Right ventricle myocardium inferior (tissue), 1 donor: ENCODE measurements at regions of chr7 and their contacts with region 1.

Region 1: GRCh38 chr7:100586266-100587025 is at the start of gene FBXO24:
- DNase-seq: peak; percentile 100
- ATAC-seq: peak; percentile 93
- total RNA-seq, gene FBXO24: 0.41 TPM

Region 2: DNA sequence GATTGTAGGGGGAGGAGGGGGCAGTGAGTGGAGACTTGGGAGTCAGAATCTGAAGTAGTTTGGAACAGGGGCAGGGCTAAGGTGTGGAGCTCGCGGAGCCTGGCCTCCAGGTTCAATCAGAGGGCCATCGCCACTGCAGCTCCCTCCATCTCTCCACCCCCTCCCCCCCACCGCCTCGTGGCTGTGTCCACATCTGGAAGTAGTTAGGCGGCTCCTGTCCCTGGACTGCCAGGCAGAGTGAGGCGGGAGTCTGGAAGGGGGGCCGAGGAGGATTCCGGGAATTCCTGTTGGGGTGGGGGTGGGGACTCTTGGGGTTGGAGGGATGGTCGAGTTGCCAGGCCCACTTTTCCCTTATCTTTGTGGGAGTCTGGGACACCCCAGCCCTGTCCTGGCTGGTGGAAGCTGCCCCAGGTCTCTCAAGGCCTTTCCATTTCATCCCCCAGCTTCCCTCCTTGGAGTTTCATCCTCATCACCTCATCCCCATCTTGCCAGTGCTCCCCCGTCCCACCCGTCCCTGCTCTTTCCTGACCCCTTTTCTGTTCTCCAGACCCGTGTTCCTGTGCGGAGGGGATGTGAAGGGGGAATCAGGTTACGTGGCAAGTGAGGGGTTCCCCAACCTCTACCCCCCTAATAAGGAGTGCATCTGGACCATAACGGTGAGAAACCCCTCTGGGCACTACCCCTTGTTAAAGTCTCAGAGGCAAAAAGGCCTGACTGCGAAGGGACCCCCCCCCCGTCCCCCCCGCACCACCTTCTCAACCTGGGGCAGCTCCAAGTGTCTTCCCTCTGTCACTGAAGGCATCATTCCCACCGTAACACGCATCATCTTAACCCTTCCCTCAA is 16.7 kb after region 1 on chr7:
- intact Hi-C with region 1: loop called (anchors 1 kb)
- DNase-seq: peak; percentile 88
- ATAC-seq: peak; percentile 68

Region 3: GRCh38 chr7:100611974-100612729 is 25.7 kb after region 1 on chr7 and contains the start of gene MOSPD3:
- intact Hi-C with region 1: loop called (anchors 2 kb)
- DNase-seq: peak; percentile 98
- ATAC-seq: peak; percentile 97
- total RNA-seq, gene MOSPD3: 9.3 TPM